ENCODE measurements at regions of chr20 and their contacts with region 1.

Region 1: DNA sequence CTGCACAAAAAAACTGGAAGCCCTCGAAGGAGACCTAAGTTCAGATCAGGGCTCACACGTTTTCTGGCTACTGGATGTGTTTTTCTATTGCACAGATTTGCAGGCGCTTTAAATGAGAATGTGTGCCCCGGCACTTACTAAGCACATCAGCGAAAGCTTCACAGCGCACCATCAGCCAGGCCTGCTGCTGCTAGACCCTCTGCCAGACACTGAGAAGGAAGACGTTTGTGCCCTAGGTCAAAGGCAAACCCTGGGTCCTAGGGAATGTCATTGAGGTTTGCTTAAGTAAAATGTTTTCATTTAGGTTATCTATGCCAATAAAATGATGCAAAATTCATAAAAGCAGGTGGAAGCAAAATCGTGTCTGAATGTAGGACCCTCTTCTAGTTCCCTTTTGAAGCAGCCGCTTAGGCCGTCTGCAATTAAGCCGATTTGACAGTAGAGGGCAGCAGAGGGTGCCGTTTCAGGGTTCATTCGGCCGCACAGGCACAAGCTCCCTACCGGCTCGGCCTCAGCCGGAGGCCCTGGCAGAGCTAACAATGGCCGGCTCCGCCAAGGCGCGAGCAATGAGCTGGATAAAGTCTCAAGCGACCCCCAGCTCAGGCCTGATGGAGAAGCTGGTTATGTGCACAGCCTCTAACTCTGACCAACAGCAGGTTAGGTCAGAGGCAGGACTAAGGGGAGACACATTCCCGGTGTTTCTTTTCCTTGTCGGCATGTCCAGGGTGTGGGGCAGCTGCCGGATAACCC is 107.2 kb upstream of the FOXA2 start:
- DNase-seq: peak; percentile 50
- H3K4me3 ChIP-seq: no peak overlapping the region
- H3K27ac ChIP-seq: no peak overlapping the region
- H3K4me1 ChIP-seq: no peaks in the 10 kb centered on the region
- CTCF ChIP-seq: peak; percentile 83

Region 2: GRCh38 chr20:22775671-22776139 is 84.2 kb after region 1 on chr20:
- CTCF ChIA-PET with region 1: no interaction called
- POLR2A ChIA-PET with region 1: no interaction called
- intact Hi-C with region 1: no loop called
- DNase-seq: no peak
- H3K4me3 ChIP-seq: no peak overlapping the region
- H3K27ac ChIP-seq: no peak overlapping the region
- H3K4me1 ChIP-seq: no peaks in the 10 kb centered on the region
- CTCF ChIP-seq: no peak

Region 3: GRCh38 chr20:22974353-22974752 is 282.8 kb after region 1 on chr20:
- CTCF ChIA-PET with region 1: no interaction called
- POLR2A ChIA-PET with region 1: no interaction called
- intact Hi-C with region 1: loop called (anchors 10 kb)
- DNase-seq: peak; percentile 2
- H3K4me3 ChIP-seq: no peak overlapping the region
- H3K27ac ChIP-seq: no peak overlapping the region
- H3K4me1 ChIP-seq: no peaks in the 10 kb centered on the region
- CTCF ChIP-seq: peak; percentile 69

Region 4: GRCh38 chr20:23050847-23051631 is 359.5 kb after region 1 on chr20:
- CTCF ChIA-PET with region 1: no interaction called
- POLR2A ChIA-PET with region 1: no interaction called
- intact Hi-C with region 1: no loop called
- DNase-seq: no peak
- H3K4me3 ChIP-seq: no peak overlapping the region
- H3K27ac ChIP-seq: no peak overlapping the region
- H3K4me1 ChIP-seq: no peaks in the 10 kb centered on the region
- CTCF ChIP-seq: 0 out of 2 replicates have a peak, but pooled peaks have one; percentile 21

Region 5: GRCh38 chr20:23235173-23236027 is 543.9 kb after region 1 on chr20:
- CTCF ChIA-PET with region 1: no interaction called
- POLR2A ChIA-PET with region 1: no interaction called
- intact Hi-C with region 1: loop called (anchors 5 kb)
- DNase-seq: peak; percentile 46
- H3K4me3 ChIP-seq: no peak overlapping the region
- H3K27ac ChIP-seq: no peak overlapping the region
- H3K4me1 ChIP-seq: no peaks in the 10 kb centered on the region
- CTCF ChIP-seq: peak; percentile 85

Region 6: GRCh38 chr20:23340524-23340923 is 649.0 kb after region 1 on chr20:
- CTCF ChIA-PET with region 1: interaction called, 3 read pairs
- POLR2A ChIA-PET with region 1: no interaction called
- intact Hi-C with region 1: loop called (anchors 1 kb)
- DNase-seq: peak; percentile 58
- H3K4me3 ChIP-seq: no peak overlapping the region
- H3K27ac ChIP-seq: no peak overlapping the region
- H3K4me1 ChIP-seq: no peaks in the 10 kb centered on the region
- CTCF ChIP-seq: peak; percentile 73

Region 7: GRCh38 chr20:23606652-23607049 is 915.1 kb after region 1 on chr20:
- CTCF ChIA-PET with region 1: no interaction called
- POLR2A ChIA-PET with region 1: no interaction called
- intact Hi-C with region 1: loop called (anchors 10 kb)
- DNase-seq: peak; percentile 55
- H3K4me3 ChIP-seq: no peak overlapping the region
- H3K27ac ChIP-seq: no peak overlapping the region
- H3K4me1 ChIP-seq: no peaks in the 10 kb centered on the region
- CTCF ChIP-seq: peak; percentile 82

Measured in OCI-LY7 (cell line).